Testis (tissue), 5 donors: ENCODE measurements at regions of chr4 and their contacts with region 1.

Region 1: GRCh38 chr4:118968005-118968404 is 79.4 kb downstream of the SYNPO2 start:
- DNase-seq: peak; percentile 79
- H3K4me3 ChIP-seq: no peak overlapping the region
- H3K27ac ChIP-seq: peak overlapping the region; percentile 71 to 86
- H3K4me1 ChIP-seq: peaks cover 63% of the 10 kb centered on the region
- H3K27me3 ChIP-seq: no peaks in the 10 kb centered on the region
- CTCF ChIP-seq: no peak
- POLR2A ChIP-seq: no peak

Region 2: DNA sequence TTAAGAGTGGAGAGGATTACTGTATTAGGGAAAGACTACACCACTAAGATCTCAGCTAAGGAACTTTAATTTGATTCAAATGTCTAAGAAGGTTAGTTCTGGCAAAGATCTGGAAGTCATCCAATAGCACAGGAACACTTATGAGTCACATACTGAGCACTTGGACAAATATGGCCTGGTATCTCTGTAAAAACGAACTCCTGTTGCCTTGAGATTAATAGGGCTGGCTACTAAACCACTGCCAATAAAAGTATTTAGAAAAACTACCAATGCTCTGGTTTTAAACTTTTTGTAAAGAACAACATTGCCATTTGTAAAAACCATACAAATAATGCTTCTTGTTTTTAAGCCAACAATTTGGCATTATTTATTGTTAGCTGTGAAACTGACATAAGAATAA is 202.6 kb before region 1 on chr4:
- intact Hi-C with region 1: loop called (anchors 10 kb)
- DNase-seq: no peak
- H3K4me3 ChIP-seq: no peak overlapping the region
- H3K27ac ChIP-seq: peak overlapping the region; percentile 57 to 66
- H3K4me1 ChIP-seq: peaks cover 61% of the 10 kb centered on the region
- H3K27me3 ChIP-seq: no peaks in the 10 kb centered on the region
- CTCF ChIP-seq: no peak
- POLR2A ChIP-seq: no peak

Region 3: GRCh38 chr4:118888666-118889311 is 79.2 kb before region 1 on chr4 and contains the start of gene SYNPO2:
- intact Hi-C with region 1: loop called (anchors 5 kb)
- DNase-seq: peak; percentile 95
- H3K4me3 ChIP-seq: peak within 1 kb of the TSS; percentile 67 to 74
- H3K27ac ChIP-seq: peak within 1 kb of the TSS; percentile 71 to 84
- H3K4me1 ChIP-seq: peaks cover 11% of the 10 kb centered on the region
- H3K27me3 ChIP-seq: no peaks in the 10 kb centered on the region
- CTCF ChIP-seq: no peak
- POLR2A ChIP-seq: peak; percentile 91
- total RNA-seq, gene SYNPO2: 44.3 to 53.4 TPM

Region 4: GRCh38 chr4:119833611-119834010 is 865.6 kb after region 1 on chr4:
- intact Hi-C with region 1: no loop called
- DNase-seq: no peak
- H3K4me3 ChIP-seq: no peak overlapping the region
- H3K27ac ChIP-seq: no peak overlapping the region
- H3K4me1 ChIP-seq: no peaks in the 10 kb centered on the region
- H3K27me3 ChIP-seq: no peaks in the 10 kb centered on the region
- CTCF ChIP-seq: no peak
- POLR2A ChIP-seq: no peak